AG04450 (cell line): ENCODE measurements at regions of chr22 and their contacts with region 1.

Region 1: GRCh38 chr22:21802056-21802455 is 65.4 kb downstream of the MAPK1 start:
- DNase-seq: no peak
- H3K4me3 ChIP-seq: no peak overlapping the region
- H3K27ac ChIP-seq: no peak overlapping the region
- H3K27me3 ChIP-seq: no peaks in the 10 kb centered on the region
- CTCF ChIP-seq: no peak

Region 2: DNA sequence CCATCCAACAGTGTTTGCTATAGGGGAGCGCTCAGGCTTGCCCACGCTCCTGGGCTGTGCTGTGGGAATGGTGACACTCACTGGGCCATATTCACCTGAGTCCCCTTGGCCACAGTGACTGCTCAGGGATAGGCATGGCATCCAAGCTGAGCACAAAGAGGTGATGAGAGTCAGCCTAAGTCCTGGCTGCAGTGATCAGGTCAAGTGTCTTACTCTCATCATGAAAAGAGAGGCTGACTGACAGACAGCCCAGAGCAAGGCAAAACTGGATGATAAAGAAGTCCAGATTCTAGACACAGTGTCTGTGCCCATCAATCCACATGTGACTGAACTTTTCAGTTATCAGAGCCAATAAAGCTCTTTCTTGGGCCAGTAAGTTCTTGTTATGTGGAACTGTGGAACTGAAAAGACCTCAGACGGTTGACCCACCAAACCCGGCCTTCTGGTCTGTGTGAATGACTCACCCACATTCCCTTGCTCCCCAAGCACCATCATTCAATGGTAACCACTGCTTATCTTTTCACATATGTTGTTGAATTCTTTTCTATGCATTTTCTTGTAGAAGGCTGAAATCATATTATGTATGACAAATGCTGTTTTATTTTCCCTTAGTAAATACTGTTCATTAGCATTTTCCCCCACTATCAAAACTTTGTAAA is 23.2 kb before region 1 on chr22:
- CTCF ChIA-PET with region 1: no interaction called
- POLR2A ChIA-PET with region 1: interaction called, 10 read pairs
- DNase-seq: peak; percentile 59
- H3K4me3 ChIP-seq: no peak overlapping the region
- H3K27ac ChIP-seq: peak overlapping the region; percentile 65
- H3K27me3 ChIP-seq: no peaks in the 10 kb centered on the region
- CTCF ChIP-seq: no peak